ENCODE measurements at regions of chr17 and their contacts with region 1.

Region 1: GRCh38 chr17:20121359-20122253 is 112.4 kb downstream of the SPECC1 start:
- DNase-seq: peak; percentile 45 to 96 (median 83)

Region 2: GRCh38 chr17:19992803-19993713 is 128.5 kb before region 1 on chr17:
- intact Hi-C with region 1: loop called (anchors 1 kb)
- DNase-seq: peak; percentile 78 to 99 (median 89)

Region 3: GRCh38 chr17:20009302-20010098 is 112.1 kb before region 1 on chr17 and contains the start of gene SPECC1:
- intact Hi-C with region 1: loop called (anchors 2 kb)
- DNase-seq: peak; percentile 22 to 98 (median 84)

Region 4: GRCh38 chr17:20189302-20189701 is 67.7 kb after region 1 on chr17:
- intact Hi-C with region 1: loop called (anchors 10 kb)
- DNase-seq: peak; percentile 76 to 97 (median 78)

Region 5: DNA sequence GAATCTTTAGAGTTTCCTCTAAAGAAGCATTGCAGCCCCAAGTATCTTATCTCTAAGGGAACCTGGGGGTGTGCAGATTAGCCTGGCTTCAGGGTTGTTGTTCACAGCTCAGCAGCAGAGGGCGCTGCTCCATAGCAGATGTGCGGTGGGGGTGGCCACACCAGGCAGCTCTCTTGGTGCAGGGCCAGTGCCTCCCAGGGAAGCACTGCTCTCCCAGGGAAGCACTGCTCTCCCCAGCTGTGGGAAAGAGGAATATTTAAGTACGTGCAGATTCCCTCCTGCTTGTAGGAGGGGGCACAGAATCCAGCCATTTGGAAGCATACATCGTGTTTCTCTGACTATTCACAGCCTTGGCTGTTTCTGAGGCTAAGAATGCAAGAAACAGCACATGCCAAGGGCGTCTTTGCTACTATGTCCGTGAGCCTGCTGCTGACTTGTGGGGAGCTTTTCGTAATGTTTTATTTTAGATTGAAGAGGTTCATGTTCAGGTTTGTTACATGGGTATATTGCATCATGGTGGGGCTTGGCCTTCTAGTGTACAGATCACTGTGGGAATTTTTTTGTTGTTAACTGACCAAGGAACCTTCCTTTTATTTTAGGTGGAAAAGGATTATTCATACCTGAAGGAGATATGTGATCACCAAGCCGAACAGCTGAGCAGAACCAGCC is 105.3 kb after region 1 on chr17:
- intact Hi-C with region 1: loop called (anchors 1 kb)
- DNase-seq: peak; percentile 81 to 99 (median 92)

Region 6: GRCh38 chr17:20315821-20316220 is 194.2 kb after region 1 on chr17:
- intact Hi-C with region 1: loop called (anchors 2 kb)
- DNase-seq: peak in 1 of 10 donors; percentile 79